Transverse colon (tissue), 4 donors: ENCODE measurements at regions of chr13 and their contacts with region 1.

Region 1: GRCh38 chr13:64413529-64413928 is 2816.6 kb downstream of the PCDH9 start:
- DNase-seq: no peak
- H3K4me3 ChIP-seq: no peak overlapping the region
- H3K27ac ChIP-seq: no peak overlapping the region
- H3K4me1 ChIP-seq: no peaks in the 10 kb centered on the region
- H3K27me3 ChIP-seq: no peaks in the 10 kb centered on the region
- CTCF ChIP-seq: no peak
- EP300 ChIP-seq: no peak
- POLR2A ChIP-seq: no peak

Region 2: GRCh38 chr13:64397701-64398100 is 15.8 kb before region 1 on chr13:
- in situ Hi-C with region 1: no loop called
- intact Hi-C with region 1: loop called (anchors 1 kb)
- DNase-seq: no peak
- H3K4me3 ChIP-seq: no peak overlapping the region
- H3K27ac ChIP-seq: no peak overlapping the region
- H3K4me1 ChIP-seq: no peaks in the 10 kb centered on the region
- H3K27me3 ChIP-seq: no peaks in the 10 kb centered on the region
- CTCF ChIP-seq: no peak
- EP300 ChIP-seq: no peak
- POLR2A ChIP-seq: no peak